ENCODE measurements at regions of chr1 and their contacts with region 1.

Region 1: DNA sequence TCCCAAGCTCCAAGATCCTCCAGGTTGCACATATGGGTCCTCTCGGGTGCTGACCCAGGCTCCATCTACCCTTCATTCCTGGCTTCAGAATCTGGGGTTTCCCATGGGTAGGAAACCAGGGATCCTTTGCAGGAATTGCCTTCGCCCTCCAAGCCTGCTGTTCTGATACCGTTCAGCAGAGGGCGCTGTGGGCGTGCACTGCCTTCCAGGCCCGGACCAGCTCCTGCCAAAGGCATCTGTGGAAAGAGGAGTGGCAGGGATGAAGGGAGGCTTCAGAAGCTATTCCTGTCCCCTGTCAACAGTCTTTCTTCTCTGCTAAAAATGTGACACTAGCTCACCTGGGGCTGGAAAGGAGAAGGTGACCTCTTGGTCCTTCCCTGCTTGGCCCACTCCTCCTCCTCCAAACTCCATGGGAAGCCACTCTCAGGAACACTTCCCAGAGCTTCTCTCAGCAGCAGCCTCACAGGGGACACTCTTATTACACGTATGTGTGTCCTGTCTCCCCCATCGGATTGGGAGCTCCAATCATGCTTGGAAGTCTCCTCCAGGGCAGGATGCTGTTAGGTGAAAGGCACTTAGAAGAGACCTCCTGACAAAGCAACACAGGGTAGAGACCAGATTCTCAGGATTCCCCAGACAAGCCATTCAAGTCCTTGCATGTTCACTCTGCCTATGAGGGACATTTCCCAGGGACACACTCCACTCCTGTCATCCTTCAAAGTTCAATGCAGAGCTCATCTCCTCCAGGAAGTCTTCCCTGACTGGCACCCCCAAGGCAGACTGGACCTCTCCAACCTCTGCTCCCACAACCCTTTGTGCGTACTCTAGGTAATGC is 71.3 kb downstream of the VWA5B1 start:
- DNase-seq: peak; percentile 54 to 99
- H3K4me3 ChIP-seq: no peak overlapping the region
- H3K27ac ChIP-seq: no peak overlapping the region
- H3K4me1 ChIP-seq: peaks cover 0 to 10% (median 4%) of the 10 kb centered on the region in 4 experiments; a peak in 4 of 7 replicates
- H3K27me3 ChIP-seq: peaks cover 13 to 48% (median 30%) of the 10 kb centered on the region in 4 experiments
- CTCF ChIP-seq: peak; percentile 96 to 98 (median 97)
- EP300 ChIP-seq: no peak
- POLR2A ChIP-seq: no peak
- RAD21 ChIP-seq: peak; percentile 90 to 91

Region 2: DNA sequence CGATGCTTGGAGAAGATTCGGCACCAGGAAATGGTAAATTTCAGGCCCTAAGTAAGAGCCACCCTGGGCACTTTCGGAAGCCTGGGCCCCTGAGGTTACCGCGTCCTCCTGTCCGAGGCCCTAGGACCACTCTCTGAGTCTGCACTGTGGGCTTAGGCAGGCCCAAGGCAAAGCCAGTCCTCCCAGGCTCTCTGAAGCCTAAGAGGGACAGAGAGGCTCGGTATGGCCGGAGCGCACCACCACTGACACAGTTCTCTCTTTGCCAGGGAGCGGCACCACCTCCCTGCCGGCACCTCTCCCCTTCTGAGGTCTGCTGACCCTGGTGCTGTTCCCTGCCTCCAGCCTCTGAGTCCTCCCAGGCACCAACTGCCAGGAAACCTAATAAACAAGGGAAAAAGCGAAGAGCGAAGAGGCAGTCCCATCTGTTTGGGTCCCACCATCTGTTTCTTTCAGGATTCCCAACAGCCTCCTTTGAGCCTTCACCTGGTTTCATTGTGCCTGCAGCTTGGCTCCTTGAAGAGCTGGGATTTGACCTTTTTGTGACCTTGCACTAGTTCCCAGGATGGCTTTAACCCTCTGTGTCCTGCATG is 13.6 kb before region 1 on chr1:
- CTCF ChIA-PET with region 1: interaction called, 37 read pairs
- POLR2A ChIA-PET with region 1: no interaction called
- DNase-seq: no peak
- H3K4me3 ChIP-seq: no peak overlapping the region
- H3K27ac ChIP-seq: no peak overlapping the region
- H3K4me1 ChIP-seq: peaks cover 2 to 5% (median 3%) of the 10 kb centered on the region in 4 experiments; a peak in 3 of 7 replicates
- H3K27me3 ChIP-seq: no peaks in the 10 kb centered on the region; a peak in 2 of 7 replicates
- CTCF ChIP-seq: no peak
- EP300 ChIP-seq: no peak
- POLR2A ChIP-seq: no peak
- RAD21 ChIP-seq: no peak

Region 3: DNA sequence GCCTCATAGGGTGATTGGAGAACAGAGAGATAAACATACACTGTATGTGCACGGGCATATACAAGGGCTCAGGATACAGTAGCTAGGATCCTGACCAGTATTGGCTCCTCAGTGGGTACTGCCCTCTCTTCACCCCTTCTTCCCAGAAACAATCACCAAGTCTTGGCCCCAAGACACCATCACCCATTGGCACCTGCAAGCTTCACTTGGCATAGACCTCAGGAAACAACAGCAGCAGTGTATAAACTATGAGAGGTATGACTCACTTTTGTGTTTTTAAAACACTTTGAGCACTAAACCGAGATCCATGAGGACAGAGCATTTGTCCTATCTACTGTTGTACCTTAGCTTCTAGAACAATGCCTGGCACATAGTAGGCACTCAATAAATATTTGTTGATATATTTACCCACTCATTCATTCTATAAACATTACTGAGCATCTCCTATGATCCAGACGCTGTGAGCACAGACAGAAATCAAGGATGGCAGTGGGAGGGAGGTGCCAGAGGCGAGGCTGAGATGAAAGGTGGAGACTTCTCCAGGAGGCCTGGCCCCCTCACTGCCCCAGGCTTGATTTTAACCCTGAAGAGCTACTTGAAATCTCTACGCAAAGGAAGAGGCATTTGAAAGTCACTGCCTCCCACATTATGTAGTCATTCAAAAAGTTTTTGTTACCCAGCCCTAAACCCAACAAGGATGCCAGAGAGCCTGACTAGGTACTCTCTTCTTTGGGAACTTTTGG is 28.7 kb after region 1 on chr1:
- CTCF ChIA-PET with region 1: interaction called, 20 read pairs
- POLR2A ChIA-PET with region 1: no interaction called
- DNase-seq: no peak
- H3K4me3 ChIP-seq: no peak overlapping the region
- H3K27ac ChIP-seq: no peak overlapping the region
- H3K4me1 ChIP-seq: peaks cover 0 to 7% (median 3%) of the 10 kb centered on the region in 4 experiments; a peak in 3 of 7 replicates
- H3K27me3 ChIP-seq: peaks cover 0 to 5% (median 1%) of the 10 kb centered on the region in 4 experiments; a peak in 4 of 7 replicates
- CTCF ChIP-seq: no peak
- EP300 ChIP-seq: no peak
- POLR2A ChIP-seq: no peak
- RAD21 ChIP-seq: no peak

Measured in H1 (cell line).